Mucosa of descending colon (tissue), 3 donors: ENCODE measurements at regions of chr17 and their contacts with region 1.

Region 1: GRCh38 chr17:50541716-50542688 is 5.0 kb upstream of the SPATA20 start:
- DNase-seq: peak; percentile 90 to 95 (median 92)
- ATAC-seq: peak; percentile 81
- H3K4me3 ChIP-seq: peak overlapping the region; percentile 12
- H3K4me1 ChIP-seq: peaks cover 64% of the 10 kb centered on the region
- CTCF ChIP-seq: no peak

Region 2: DNA sequence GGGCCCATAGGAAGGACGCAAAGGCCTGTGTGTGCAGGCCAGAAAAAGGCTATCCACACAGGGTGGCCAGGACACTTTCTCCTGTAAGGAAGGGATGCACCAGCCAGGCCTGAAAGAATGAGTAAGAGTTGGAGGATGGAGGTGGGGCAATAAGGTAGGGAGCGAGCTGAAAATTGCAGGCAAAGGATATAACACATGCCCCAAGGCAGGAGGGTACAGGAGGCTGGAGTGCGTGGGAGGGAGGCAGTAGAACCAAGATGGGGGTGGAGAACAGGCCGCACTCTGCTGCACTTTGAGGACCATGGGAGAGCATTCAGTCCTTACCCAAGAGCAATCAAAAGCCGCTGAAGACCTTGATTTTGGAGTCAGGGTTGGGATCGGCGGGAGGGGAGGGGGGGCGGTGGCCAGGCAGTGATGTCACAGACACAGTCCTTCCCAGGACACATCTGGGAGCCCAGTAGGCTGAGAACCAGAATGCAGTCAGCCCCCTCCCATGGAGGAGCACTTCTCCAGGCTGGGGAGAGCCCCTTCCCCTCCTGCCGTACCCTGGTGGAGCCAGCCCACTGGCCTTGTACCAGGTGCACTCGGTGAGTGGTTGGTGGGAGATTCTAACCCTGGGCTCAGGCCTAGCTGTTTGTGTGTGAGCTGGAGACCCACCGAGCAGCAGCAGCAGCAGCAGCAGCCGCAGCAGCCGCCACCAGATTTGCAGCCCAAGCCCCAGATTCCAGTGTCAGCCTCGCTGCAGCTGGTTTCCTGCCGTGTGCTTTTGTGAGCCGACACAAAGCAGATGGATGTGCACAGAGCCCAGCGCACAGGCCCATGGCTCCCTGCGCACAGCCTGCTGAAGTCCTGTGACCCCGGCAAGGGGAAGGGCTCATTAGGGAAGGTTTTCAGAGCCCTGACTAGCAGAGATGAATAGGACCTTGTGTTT is 148.2 kb after region 1 on chr17:
- intact Hi-C with region 1: loop called in 1 of 2 experiments (anchors 5 kb)
- DNase-seq: no peak
- ATAC-seq: no peak
- H3K4me3 ChIP-seq: no peak overlapping the region
- H3K4me1 ChIP-seq: peaks cover 72% of the 10 kb centered on the region
- CTCF ChIP-seq: no peak